Activated CD4-positive, alpha-beta T cell treated with anti-CD3 and anti-CD28 coated beads for 36 hours (primary cell): ENCODE measurements at regions of chr11 and their contacts with region 1.

Region 1: GRCh38 chr11:14463623-14464022 is 36.0 kb downstream of the COPB1 start:
- DNase-seq: no peak
- ATAC-seq: no peak
- H3K4me3 Mint-ChIP-seq: no peak overlapping the region
- H3K27ac Mint-ChIP-seq: no peak overlapping the region
- H3K4me1 Mint-ChIP-seq: peaks cover 10% of the 10 kb centered on the region
- H3K27me3 Mint-ChIP-seq: no peaks in the 10 kb centered on the region

Region 2: GRCh38 chr11:14300661-14301304 is 162.8 kb before region 1 on chr11:
- CTCF ChIA-PET with region 1: interaction called, 21 read pairs
- POLR2A ChIA-PET with region 1: no interaction called
- intact Hi-C with region 1: no loop called
- DNase-seq: peak; percentile 66
- ATAC-seq: peak; percentile 97
- H3K4me3 Mint-ChIP-seq: no peak overlapping the region
- H3K27ac Mint-ChIP-seq: no peak overlapping the region
- H3K4me1 Mint-ChIP-seq: no peaks in the 10 kb centered on the region
- H3K27me3 Mint-ChIP-seq: no peaks in the 10 kb centered on the region

Region 3: DNA sequence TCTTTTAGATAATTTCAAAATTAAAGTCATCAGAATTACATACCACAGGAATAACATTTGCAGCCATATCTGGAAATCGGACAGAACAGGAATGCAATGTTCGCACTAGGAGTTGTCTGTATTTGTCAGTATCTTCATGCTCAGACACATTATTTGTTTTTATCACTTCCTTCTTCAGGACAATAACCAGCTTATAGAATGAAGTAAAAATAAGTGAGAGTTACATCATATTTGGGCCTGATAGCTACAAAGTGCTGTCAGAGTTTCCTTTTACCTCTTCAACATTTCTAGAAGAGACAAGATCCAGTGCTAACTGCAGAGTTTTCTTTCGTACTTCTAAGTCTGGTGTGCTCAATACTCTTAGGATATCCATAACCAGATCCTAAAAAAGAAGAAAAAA is 17.1 kb after region 1 on chr11:
- CTCF ChIA-PET with region 1: interaction called, 15 read pairs
- POLR2A ChIA-PET with region 1: no interaction called
- intact Hi-C with region 1: no loop called
- DNase-seq: no peak
- ATAC-seq: no peak
- H3K4me3 Mint-ChIP-seq: no peak overlapping the region
- H3K27ac Mint-ChIP-seq: peak overlapping the region; percentile 79
- H3K4me1 Mint-ChIP-seq: peaks cover 14% of the 10 kb centered on the region
- H3K27me3 Mint-ChIP-seq: no peaks in the 10 kb centered on the region

Region 4: GRCh38 chr11:14499554-14500180 is 36.0 kb after region 1 on chr11 and contains the start of gene COPB1:
- CTCF ChIA-PET with region 1: interaction called, 3 read pairs
- POLR2A ChIA-PET with region 1: no interaction called
- intact Hi-C with region 1: loop called in 1 of 2 experiments (anchors 1 kb)
- DNase-seq: peak; percentile 96
- ATAC-seq: peak; percentile 92
- H3K4me3 Mint-ChIP-seq: peak within 1 kb of the TSS; percentile 87
- H3K27ac Mint-ChIP-seq: peak within 1 kb of the TSS; percentile 95
- H3K4me1 Mint-ChIP-seq: peaks cover 35% of the 10 kb centered on the region
- H3K27me3 Mint-ChIP-seq: no peaks in the 10 kb centered on the region
- total RNA-seq, gene COPB1: 102 to 106 TPM

Region 5: GRCh38 chr11:16392616-16393015 is 1929.0 kb after region 1 on chr11:
- CTCF ChIA-PET with region 1: no interaction called
- POLR2A ChIA-PET with region 1: no interaction called
- intact Hi-C with region 1: no loop called
- DNase-seq: no peak
- ATAC-seq: no peak
- H3K4me3 Mint-ChIP-seq: no peak overlapping the region
- H3K27ac Mint-ChIP-seq: no peak overlapping the region
- H3K4me1 Mint-ChIP-seq: no peaks in the 10 kb centered on the region
- H3K27me3 Mint-ChIP-seq: no peaks in the 10 kb centered on the region